ENCODE measurements at regions of chr18 and their contacts with region 1.

Region 1: DNA sequence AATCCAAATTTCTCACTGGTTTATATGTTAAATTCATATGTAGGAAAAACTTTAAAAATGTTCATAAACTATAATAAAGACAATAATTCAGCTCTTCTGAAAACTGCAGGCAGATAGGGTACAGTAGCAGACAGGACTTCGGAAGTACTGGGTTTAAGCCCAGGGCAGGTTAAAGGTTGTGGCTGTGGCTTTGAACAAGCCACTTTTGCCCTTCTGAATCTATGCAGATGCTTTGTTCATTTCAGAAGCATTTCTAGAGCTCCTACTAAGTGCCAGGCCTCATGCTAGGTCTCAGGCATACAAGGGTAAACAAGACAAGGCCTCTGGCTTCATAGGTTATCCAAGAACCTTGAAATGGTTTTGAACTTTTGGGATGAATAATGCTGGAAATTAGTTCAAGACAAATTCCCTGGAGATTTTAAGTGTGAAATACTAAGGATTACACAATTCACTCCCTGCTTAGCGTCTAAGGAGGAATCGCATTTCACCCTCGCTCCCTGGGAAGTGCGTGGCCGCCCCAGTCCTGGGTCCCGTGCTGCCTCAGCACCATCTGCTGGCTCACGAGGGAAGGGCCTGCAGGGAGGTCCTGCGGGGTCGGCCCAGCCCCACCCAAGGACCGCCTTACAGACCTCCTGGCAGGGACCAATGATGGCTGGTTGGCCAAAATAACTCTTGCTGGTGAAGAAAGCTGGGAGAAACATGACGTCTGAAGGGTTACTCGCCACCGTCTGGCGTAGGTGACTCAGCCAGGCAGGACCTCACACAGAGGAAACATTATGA is 67.7 kb upstream of the L3MBTL4 start:
- DNase-seq: peak; percentile 84
- H3K4me3 ChIP-seq: no peak overlapping the region
- H3K27ac ChIP-seq: no peak overlapping the region
- H3K4me1 ChIP-seq: no peaks in the 10 kb centered on the region
- H3K27me3 ChIP-seq: no peaks in the 10 kb centered on the region
- CTCF ChIP-seq: peak in 3 of 4 experiments; percentile 19 to 36 (median 35)
- EP300 ChIP-seq: no peak
- POLR2A ChIP-seq: no peak

Region 2: DNA sequence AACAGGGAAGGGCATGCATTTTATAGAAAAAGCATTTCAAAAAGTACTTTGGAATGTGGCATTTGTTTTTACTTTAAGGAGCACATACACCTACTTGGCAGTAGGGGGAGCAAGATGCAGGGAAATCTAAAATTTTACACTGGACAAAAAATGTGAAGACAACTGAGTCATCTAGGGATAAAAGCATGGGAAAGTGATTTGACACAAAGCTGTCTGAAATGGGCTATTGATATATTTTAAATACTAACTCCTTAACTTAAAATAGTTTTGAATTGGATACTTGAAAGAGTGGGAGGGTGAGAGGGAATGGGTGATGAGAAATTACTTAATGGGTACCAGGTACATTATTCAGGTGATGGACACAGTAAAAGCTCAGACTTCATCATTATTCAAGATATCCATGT is 602.9 kb before region 1 on chr18:
- intact Hi-C with region 1: loop called (anchors 5 kb)
- DNase-seq: no peak
- H3K4me3 ChIP-seq: no peak overlapping the region
- H3K27ac ChIP-seq: no peak overlapping the region
- H3K4me1 ChIP-seq: no peaks in the 10 kb centered on the region
- H3K27me3 ChIP-seq: peaks cover 0 to 13% (median 0%) of the 10 kb centered on the region in 3 donors
- CTCF ChIP-seq: peak in 3 of 4 experiments; percentile 54 to 67 (median 55)
- EP300 ChIP-seq: no peak
- POLR2A ChIP-seq: no peak

Region 3: GRCh38 chr18:6537475-6537874 is 55.1 kb after region 1 on chr18:
- intact Hi-C with region 1: no loop called
- DNase-seq: no peak
- H3K4me3 ChIP-seq: no peak overlapping the region
- H3K27ac ChIP-seq: no peak overlapping the region
- H3K4me1 ChIP-seq: no peaks in the 10 kb centered on the region
- H3K27me3 ChIP-seq: no peaks in the 10 kb centered on the region
- CTCF ChIP-seq: no peak
- EP300 ChIP-seq: no peak
- POLR2A ChIP-seq: no peak

Region 4: DNA sequence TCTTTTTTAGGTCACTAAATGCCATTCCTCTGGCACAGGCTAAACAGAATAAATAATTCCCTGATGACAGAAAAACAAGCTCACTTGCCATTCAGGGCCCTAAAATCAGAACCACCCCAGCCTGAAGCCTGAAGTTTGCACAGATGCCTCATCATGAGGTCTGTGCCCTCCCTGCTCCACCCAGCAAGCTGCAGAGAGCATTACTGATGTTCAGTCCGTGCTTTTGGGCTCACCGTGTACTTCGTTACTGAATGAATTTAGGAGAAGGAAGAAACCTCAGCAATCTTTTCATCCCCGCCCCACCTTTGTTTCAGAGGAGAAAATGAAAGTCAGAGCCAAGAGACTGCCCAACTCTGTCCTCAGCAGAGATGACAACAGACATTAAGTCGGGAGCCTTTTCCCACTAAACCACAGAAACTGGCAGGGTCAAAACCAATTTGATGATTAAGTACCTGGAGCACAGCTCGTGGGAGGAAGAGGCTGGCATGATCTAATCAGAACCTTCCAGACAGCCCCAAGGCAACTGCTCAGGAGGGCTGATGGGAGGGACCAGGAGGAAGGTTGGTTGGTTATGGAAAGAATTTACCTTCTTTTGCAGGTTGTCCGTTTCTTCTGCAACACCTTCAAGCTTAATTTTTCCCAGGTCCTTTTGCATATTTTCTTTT is 512.5 kb after region 1 on chr18:
- intact Hi-C with region 1: no loop called
- DNase-seq: no peak
- H3K4me3 ChIP-seq: no peak overlapping the region
- H3K27ac ChIP-seq: no peak overlapping the region
- H3K4me1 ChIP-seq: peaks cover 0 to 8% (median 3%) of the 10 kb centered on the region in 4 donors
- H3K27me3 ChIP-seq: no peaks in the 10 kb centered on the region
- CTCF ChIP-seq: no peak
- EP300 ChIP-seq: no peak
- POLR2A ChIP-seq: no peak

Measured in sigmoid colon (tissue), 7 donors.